ENCODE measurements at regions of chr13 and their contacts with region 1.

Region 1: DNA sequence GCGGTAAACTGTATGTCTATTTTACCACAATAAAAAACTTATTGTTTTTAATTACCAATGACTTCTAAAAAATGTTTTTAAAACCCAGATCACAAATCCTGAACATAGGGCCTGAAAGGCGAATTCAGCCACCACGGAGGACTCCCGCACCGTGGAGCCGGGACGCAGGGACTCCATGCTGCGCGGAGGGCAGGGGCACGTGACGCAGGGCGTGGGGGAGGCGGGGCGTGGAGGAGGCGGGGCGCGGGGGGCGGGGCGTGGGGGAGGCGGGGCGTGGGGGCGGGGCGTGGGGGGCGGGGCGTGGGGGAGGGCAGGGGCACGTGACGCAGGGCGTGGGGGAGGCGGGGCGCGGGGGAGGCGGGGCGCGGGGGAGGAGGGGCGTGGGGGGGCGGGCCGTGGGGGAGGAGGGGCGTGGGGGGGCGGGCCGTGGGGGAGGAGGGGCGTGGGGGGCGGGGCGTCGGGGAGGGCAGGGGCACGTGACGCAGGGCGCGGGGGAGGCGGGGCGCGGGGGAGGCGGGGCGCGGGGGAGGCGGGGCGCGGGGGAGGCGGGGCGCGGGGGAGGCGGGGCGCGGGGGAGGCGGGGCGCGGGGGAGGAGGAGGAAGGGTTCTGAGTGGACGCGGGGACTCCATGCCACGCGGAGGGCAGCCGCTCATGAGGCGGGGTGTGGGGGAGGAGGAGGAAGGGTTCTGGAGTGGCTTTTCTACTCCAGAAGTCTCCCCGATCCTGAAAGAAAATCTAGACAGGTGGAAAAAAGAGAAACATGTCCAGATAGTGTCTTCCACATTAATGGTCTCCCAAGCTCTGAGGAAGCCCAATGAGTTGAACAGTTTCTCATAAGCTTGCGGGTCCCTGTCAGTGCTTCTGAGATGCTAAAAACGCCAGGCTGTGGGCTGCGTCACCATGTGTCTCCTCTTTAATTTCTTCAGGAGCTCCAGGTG is 4.4 kb upstream of the PROZ start:
- DNase-seq: peak; percentile 68
- H3K4me3 Mint-ChIP-seq: peak overlapping the region; percentile 71
- H3K27ac Mint-ChIP-seq: peak overlapping the region; percentile 10
- H3K4me1 Mint-ChIP-seq: peaks cover 17% of the 10 kb centered on the region
- H3K27me3 Mint-ChIP-seq: peaks cover 4% of the 10 kb centered on the region

Region 2: GRCh38 chr13:113064534-113065405 is 89.3 kb before region 1 on chr13:
- CTCF ChIA-PET with region 1: no interaction called
- intact Hi-C with region 1: no loop called
- DNase-seq: no peak
- H3K4me3 Mint-ChIP-seq: no peak overlapping the region
- H3K27ac Mint-ChIP-seq: no peak overlapping the region
- H3K4me1 Mint-ChIP-seq: no peaks in the 10 kb centered on the region
- H3K27me3 Mint-ChIP-seq: no peaks in the 10 kb centered on the region

Region 3: GRCh38 chr13:113110048-113110851 is 43.8 kb before region 1 on chr13:
- CTCF ChIA-PET with region 1: no interaction called
- intact Hi-C with region 1: loop called (anchors 5 kb)
- DNase-seq: peak; percentile 16
- H3K4me3 Mint-ChIP-seq: peak overlapping the region; percentile 38
- H3K27ac Mint-ChIP-seq: no peak overlapping the region
- H3K4me1 Mint-ChIP-seq: peaks cover 4% of the 10 kb centered on the region
- H3K27me3 Mint-ChIP-seq: peaks cover 3% of the 10 kb centered on the region